ENCODE measurements at regions of chr7 and their contacts with region 1.

Region 1: DNA sequence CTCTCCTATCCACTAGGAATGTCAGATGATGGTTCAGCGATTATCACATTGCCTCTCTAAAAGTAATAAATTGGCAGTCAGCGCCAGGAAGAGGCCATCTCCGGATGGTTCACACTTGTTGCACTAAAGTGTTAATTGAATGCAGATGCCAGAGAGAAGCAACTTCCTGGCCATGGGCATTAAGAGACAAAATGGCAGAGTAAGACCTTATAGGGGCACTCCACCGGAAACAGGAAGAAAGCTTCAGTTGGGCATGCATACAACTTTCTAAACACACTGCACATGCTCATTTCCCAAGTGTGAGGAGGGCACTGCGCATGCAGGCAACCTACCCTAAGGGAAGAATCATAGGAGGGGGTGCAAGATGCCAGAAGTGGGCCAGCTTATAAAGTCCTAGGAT is 71.7 kb upstream of the AUTS2 start:
- DNase-seq: no peak
- ATAC-seq: no peak
- H3K4me3 ChIP-seq: no peak overlapping the region
- H3K4me3 Mint-ChIP-seq: no peak overlapping the region
- H3K27ac ChIP-seq: no peak overlapping the region
- H3K27ac Mint-ChIP-seq: no peak overlapping the region
- H3K4me1 ChIP-seq: no peaks in the 10 kb centered on the region
- H3K4me1 Mint-ChIP-seq: no peaks in the 10 kb centered on the region
- H3K27me3 ChIP-seq: no peaks in the 10 kb centered on the region
- H3K27me3 Mint-ChIP-seq: peaks cover 5% of the 10 kb centered on the region
- CTCF ChIP-seq: no peak

Region 2: DNA sequence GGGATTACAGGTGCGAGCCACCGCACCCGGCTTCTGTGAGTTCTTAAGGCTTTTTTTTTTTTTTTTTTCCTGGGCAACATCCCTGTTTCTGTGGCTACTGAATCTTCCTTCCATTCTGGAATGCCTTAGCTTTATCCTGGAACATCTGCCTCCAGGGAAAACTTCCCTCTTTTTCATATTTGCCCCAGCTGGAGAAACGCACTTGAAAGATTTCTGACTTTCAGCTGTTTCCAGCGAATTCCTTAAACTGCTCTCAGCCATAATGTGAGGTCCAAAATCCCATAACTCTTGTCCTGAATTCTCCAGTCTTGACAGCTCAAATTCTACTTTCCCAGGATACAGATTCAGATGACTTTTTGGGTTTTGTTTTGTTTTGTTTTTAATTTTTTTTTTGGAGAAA is 191.9 kb before region 1 on chr7:
- CTCF ChIA-PET with region 1: no interaction called
- POLR2A ChIA-PET with region 1: no interaction called
- intact Hi-C with region 1: no loop called
- DNase-seq: no peak
- ATAC-seq: no peak
- H3K4me3 ChIP-seq: no peak overlapping the region
- H3K4me3 Mint-ChIP-seq: no peak overlapping the region
- H3K27ac ChIP-seq: no peak overlapping the region
- H3K27ac Mint-ChIP-seq: no peak overlapping the region
- H3K4me1 ChIP-seq: no peaks in the 10 kb centered on the region
- H3K4me1 Mint-ChIP-seq: no peaks in the 10 kb centered on the region
- H3K27me3 ChIP-seq: no peaks in the 10 kb centered on the region
- H3K27me3 Mint-ChIP-seq: no peaks in the 10 kb centered on the region
- CTCF ChIP-seq: no peak

Region 3: DNA sequence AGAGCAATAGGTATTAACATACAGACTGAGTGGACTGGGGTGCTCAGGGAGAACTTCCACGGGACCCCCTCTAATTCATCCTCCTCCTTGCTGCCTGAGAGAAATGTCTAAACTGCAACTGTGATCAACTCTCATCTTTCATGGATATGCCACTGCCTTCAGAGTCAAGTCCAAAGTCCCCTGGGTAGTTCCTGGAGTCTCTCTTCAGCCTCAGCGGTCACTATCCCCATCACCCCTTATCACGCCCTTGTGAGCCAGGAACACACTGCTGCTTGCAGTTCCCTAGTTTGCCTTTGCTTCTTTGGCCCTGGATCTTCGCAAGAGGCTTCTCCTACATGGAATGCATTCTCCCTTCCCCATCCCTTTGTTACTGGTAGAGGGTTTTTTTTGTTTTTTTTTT is 13.0 kb after region 1 on chr7:
- CTCF ChIA-PET with region 1: no interaction called
- POLR2A ChIA-PET with region 1: no interaction called
- intact Hi-C with region 1: loop called in 1 of 2 experiments (anchors 1 kb)
- DNase-seq: no peak
- ATAC-seq: no peak
- H3K4me3 ChIP-seq: no peak overlapping the region
- H3K4me3 Mint-ChIP-seq: no peak overlapping the region
- H3K27ac ChIP-seq: no peak overlapping the region
- H3K27ac Mint-ChIP-seq: no peak overlapping the region
- H3K4me1 ChIP-seq: no peaks in the 10 kb centered on the region
- H3K4me1 Mint-ChIP-seq: no peaks in the 10 kb centered on the region
- H3K27me3 ChIP-seq: no peaks in the 10 kb centered on the region
- H3K27me3 Mint-ChIP-seq: no peaks in the 10 kb centered on the region
- CTCF ChIP-seq: no peak